K562 (cell line): ENCODE measurements at regions of chr3 and their contacts with region 1.

Region 1: DNA sequence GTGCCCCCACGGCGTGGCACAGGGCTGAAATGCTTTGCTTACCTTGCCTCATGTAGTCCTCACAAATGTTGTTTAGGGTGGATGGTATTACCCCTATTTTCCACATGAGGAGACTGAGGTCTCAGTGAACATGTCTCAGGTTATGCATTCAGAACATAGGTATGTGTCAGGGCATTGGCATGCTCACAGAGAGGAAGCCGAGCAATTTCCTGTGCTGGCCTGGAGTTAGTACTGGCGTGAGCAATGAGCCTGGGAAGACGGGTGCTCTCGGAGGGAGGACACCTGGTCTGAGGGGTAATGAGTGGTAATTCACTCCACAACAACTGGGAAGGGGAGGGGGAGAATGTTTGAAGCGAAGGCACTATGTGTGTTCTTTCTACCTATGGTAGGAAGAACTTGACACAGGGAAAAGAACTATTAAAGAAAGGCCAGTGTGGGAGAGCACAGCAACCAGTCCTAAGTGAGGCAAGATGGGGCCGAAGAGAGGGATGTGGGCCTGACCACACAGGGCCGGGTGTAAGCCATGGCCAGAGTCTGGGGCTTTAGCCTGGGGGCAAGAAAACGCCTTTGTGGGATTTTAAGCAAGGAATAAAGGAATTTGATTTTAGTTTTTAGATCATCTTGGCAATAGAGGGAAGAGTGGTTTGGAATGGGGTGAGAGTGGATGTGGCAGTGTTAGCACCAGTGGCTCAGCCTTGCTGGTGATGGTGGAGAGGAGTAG is 4.9 kb upstream of the FAM131A start:
- DNase-seq: no peak
- ATAC-seq: no peak
- H3K4me3 ChIP-seq: no peak overlapping the region
- H3K27ac ChIP-seq: peak overlapping the region; percentile 83; the same call in 2 of the 3 replicates
- H3K4me1 ChIP-seq: peaks cover 50% of the 10 kb centered on the region in 2 experiments
- H3K27me3 ChIP-seq: no peaks in the 10 kb centered on the region
- CTCF ChIP-seq: no peak
- EP300 ChIP-seq: no peak
- POLR2A ChIP-seq: peak; percentile 47; the same call in 1 of the 2 replicates
- RAD21 ChIP-seq: no peak

Region 2: GRCh38 chr3:184320099-184320445 is 12.5 kb before region 1 on chr3:
- CTCF ChIA-PET with region 1: no interaction called
- POLR2A ChIA-PET with region 1: interaction called, 24 read pairs
- in situ Hi-C with region 1: no loop called
- intact Hi-C with region 1: no loop called
- DNase-seq: peak in 3 of 4 experiments; percentile 39 to 49 (median 49)
- ATAC-seq: peak; percentile 15
- H3K4me3 ChIP-seq: no peak overlapping the region
- H3K27ac ChIP-seq: no peak overlapping the region
- H3K4me1 ChIP-seq: peaks cover 13 to 35% of the 10 kb centered on the region in 2 experiments; a peak in 4 of 5 replicates
- H3K27me3 ChIP-seq: no peaks in the 10 kb centered on the region
- CTCF ChIP-seq: no peak
- EP300 ChIP-seq: no peak
- POLR2A ChIP-seq: no peak
- RAD21 ChIP-seq: no peak